ENCODE measurements at regions of chr2 and their contacts with region 1.

Region 1: DNA sequence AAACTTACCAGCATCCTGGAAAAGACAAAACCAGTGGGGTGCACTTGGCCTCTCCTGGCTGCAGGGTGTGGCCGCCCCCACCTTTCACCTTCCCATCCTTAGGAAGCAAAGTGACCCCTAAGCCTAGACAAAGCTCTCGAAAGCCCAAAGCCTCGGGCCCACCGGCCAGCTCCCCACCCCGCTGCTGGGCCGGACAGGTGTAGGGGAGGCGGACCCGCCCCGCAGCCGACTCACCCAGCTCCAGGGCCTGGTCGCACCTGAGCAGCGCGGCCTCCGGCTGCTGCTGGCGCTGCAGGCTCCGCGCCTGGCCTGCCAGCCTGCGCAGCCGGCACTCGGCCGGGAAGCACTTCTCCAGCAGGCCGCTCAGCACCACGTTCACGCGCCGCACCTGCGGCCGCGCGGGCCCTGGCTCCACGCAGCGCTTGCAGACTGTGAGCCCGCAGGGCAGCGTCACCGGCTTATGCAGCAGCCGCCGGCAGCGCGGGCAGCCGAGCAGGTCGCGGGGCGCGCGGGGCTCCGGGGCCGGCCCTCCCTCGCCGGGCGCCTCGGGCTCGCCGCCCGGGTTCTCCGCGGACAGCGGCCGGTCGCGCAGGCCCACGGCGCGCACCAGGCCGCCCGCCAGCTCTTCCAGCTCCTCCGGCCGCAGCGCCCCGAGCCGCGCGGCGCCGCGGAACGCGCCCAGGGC is 978 bp downstream of the LONRF2 start:
- DNase-seq: no peak
- H3K4me3 ChIP-seq: peak overlapping the region; percentile 47 to 80 (median 64)
- H3K27ac ChIP-seq: peak overlapping the region; percentile 84 to 91 (median 86)
- H3K4me1 ChIP-seq: peaks cover 0 to 19% (median 12%) of the 10 kb centered on the region in 4 donors
- H3K27me3 ChIP-seq: peaks cover 0 to 5% (median 0%) of the 10 kb centered on the region in 3 donors
- CTCF ChIP-seq: peak in 3 of 4 experiments; percentile 8 to 42 (median 38)
- EP300 ChIP-seq: no peak
- POLR2A ChIP-seq: no peak

Region 2: DNA sequence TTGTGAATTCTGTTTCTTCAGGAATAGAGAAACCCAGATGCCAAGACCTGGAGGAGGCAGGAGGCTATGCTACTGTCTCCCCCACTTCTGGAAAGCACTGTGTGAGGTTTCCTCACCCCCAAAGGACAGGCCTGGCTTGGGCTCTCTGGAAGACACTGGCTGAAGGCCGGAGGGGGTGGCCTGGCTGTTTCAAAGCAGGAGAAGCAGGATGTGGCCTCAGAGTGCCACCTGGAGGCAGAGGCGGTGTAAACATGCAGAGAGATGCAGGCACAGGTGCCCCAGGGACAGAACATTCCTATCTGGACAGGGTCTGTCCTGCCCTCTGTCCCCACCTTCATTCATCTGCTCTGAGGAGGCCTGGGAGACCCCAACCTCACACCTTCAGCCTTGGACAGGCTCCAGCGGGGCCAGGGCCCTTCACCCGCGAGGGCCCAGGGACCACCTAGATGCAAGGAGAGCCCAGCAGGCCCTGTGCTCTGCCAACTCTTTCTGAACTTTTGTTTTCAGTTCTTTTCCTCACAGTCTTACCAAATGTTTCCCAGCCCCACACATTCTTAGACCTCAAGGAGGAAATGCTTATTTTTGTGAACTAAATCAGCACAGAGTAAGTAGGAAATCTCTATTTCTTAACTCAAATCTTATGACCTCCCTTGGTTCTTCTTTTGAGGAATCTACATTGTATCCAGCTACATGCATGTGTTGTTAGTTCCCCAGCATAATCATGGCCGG is 78.3 kb before region 1 on chr2:
- intact Hi-C with region 1: no loop called
- DNase-seq: peak; percentile 84
- H3K4me3 ChIP-seq: no peak overlapping the region
- H3K27ac ChIP-seq: no peak overlapping the region
- H3K4me1 ChIP-seq: peaks cover 0 to 10% (median 8%) of the 10 kb centered on the region in 4 donors
- H3K27me3 ChIP-seq: no peaks in the 10 kb centered on the region
- CTCF ChIP-seq: peak; percentile 67 to 76 (median 73)
- EP300 ChIP-seq: no peak
- POLR2A ChIP-seq: no peak

Region 3: DNA sequence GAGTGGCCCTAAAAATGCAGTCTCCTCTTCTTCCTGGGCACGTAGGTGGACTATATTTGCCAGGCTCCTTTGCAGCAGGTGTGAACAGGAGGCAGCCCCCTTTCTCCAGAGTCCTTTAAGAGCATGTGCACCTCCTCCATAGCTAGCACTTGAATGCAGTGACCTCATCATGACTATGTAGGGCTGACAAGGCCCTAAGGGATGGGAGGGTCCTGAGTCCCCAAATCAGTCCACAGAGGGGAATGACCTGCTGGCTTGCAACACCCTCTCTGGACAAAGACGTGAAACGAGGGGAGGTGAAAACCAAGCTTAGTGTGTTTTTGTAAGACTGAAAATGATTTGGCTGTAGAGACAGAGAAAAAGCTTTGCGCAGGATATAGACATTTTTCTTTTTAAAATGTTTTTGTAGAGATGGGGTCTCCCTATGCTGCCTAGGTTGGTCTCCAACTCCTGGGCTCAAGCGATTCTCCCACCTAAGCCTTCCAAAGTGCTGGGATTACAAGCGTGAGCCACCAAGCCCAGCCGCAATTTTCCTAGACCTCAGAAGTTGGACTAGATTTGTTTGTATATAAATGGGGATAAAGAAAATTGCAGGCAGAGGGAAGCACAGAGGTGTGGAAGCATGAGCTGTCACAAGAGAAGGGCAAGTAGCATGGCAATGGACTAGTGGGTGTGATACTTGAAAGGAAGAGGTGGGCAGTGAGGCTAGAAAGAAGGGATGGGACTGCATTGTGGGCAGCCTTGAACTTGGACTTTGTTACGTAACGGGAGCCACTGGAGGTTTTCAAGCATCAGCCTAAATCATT is 27.8 kb before region 1 on chr2:
- intact Hi-C with region 1: loop called (anchors 1 kb)
- DNase-seq: no peak
- H3K4me3 ChIP-seq: no peak overlapping the region
- H3K27ac ChIP-seq: peak overlapping the region in 2 of 4 donors; percentile 80 to 86
- H3K4me1 ChIP-seq: peaks cover 0 to 33% (median 26%) of the 10 kb centered on the region in 4 donors
- H3K27me3 ChIP-seq: no peaks in the 10 kb centered on the region
- CTCF ChIP-seq: no peak
- EP300 ChIP-seq: no peak
- POLR2A ChIP-seq: no peak

Region 4: DNA sequence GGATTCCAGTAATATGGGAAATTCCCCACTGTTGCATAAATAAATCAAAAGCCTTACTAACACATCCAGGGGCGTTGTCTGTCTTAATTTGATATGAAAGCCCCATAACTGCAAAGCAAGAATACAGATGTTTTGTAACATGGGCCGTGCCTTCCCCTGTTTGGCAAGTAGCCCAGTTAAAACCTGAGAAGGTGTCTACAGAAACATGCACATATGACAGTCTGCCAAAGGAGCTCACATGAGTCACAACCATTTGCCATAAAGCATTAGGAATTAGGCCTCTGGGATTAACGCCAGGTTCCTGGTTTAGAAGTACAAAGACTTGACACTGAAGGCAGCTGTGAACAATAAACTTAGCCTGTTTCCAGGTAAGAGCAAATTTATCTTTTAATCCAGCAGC is 44.1 kb after region 1 on chr2:
- intact Hi-C with region 1: loop called (anchors 5 kb)
- DNase-seq: no peak
- H3K4me3 ChIP-seq: no peak overlapping the region
- H3K27ac ChIP-seq: peak overlapping the region; percentile 2 to 54 (median 19)
- H3K4me1 ChIP-seq: peaks cover 0 to 19% (median 16%) of the 10 kb centered on the region in 4 donors
- H3K27me3 ChIP-seq: no peaks in the 10 kb centered on the region
- CTCF ChIP-seq: no peak
- EP300 ChIP-seq: no peak
- POLR2A ChIP-seq: no peak